Ascending aorta (tissue), 2 donors: ENCODE measurements at regions of chr9 and their contacts with region 1.

Region 1: GRCh38 chr9:127122176-127123063 is at the start of gene ANGPTL2:
- DNase-seq: peak; percentile 76 to 95
- H3K4me3 ChIP-seq: peak within 1 kb of the TSS; percentile 67 to 77
- H3K27ac ChIP-seq: peak within 1 kb of the TSS; percentile 90 to 93
- H3K4me1 ChIP-seq: peaks cover 13 to 28% of the 10 kb centered on the region in 2 donors
- H3K27me3 ChIP-seq: no peaks in the 10 kb centered on the region
- CTCF ChIP-seq: peak in 2 of 3 experiments; percentile 12 to 16
- total RNA-seq, gene ANGPTL2: 19.6 TPM

Region 2: DNA sequence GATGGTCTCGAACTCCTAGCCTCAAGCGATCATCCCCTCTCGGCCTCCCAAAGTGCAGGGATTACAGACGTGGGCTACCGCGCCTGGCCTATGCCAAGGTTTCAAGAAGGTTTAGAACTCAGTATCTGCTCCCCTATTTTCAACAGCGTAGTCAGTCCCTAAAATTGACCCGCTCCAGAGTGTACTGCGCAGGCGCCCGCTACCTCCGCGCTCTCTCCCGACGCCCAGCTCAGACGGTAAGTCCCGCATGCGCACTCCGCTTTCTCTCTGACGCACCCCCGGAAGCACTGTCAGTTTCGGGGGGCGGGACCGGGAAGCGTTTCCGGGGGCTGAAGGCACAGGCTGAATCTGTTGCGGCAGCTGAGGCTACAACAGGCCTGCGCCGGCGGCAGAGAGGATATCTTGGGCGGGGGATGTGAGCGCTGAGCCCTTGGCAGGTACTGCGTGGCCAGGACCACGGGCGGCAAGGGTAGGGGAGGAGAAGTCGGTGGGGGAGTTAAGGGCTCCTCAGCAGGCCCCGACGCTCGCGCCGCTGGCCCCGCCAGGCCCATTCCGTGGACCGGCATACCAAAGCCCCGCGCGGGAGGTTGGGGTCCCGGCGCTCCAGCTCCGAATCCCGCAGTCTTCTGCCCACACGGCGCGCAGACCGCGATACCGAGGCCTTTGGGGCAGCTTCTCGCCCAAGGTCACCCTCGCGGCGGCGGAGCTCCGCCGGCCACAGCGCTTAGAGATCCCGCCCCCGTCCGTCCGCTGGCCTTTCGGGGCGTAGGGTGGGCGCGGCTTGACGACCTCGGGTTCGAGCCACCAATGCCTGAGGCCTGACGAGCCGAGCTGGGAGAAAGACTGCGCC is 317.5 kb before region 1 on chr9 and contains the start of gene ZBTB43:
- intact Hi-C with region 1: no loop called
- DNase-seq: peak; percentile 88 to 98
- H3K4me3 ChIP-seq: peak within 1 kb of the TSS; percentile 89 to 97
- H3K27ac ChIP-seq: peak within 1 kb of the TSS; percentile 76 to 80
- H3K4me1 ChIP-seq: peaks cover 10 to 13% of the 10 kb centered on the region in 2 donors
- H3K27me3 ChIP-seq: no peaks in the 10 kb centered on the region
- CTCF ChIP-seq: no peak
- total RNA-seq, gene ZBTB43: 2.4 TPM

Region 3: GRCh38 chr9:127021664-127022363 is 100.6 kb before region 1 on chr9:
- intact Hi-C with region 1: loop called (anchors 5 kb)
- DNase-seq: peak; percentile 69 to 93
- H3K4me3 ChIP-seq: no peak overlapping the region
- H3K27ac ChIP-seq: peak overlapping the region; percentile 69 to 73
- H3K4me1 ChIP-seq: peaks cover 3 to 13% of the 10 kb centered on the region in 2 donors
- H3K27me3 ChIP-seq: no peaks in the 10 kb centered on the region
- CTCF ChIP-seq: no peak

Region 4: DNA sequence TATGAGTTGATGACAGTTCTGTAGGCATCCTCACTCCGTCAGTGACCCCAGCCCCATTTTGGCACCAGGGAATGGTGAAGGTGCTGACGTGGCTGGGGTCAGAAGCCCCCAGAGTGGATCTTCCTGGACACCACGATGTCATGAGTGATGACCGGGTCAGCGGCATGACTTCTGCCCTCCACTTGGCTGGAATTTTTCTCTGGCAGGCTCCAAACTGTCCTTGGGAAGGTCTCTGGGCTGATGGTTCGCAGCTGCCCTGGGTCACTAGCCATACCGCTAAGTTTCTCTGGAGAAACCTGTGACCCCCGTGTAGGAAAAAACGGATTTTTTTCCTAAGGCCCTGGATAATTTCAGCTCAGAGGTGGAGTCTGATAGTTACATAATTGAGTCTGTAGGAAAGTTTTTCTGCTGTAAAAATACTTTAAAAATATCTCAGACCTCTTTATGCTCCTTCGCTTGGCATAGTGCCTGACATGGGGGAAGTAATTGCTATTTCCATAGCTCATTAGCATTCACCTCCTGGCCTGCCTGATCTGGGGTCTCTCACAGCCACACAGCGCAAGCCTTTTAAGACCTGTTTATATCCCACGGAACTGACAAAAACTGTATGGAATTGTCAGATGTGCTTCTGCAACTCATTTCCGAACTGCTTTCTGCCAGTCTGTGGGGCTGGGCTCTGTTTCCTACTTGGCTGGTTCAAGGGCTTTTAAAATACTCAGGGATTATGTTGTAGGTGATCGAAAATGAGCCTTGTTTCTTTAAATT is 69.2 kb before region 1 on chr9:
- intact Hi-C with region 1: loop called (anchors 2 kb)
- DNase-seq: peak in 1 of 2 donors; percentile 61
- H3K4me3 ChIP-seq: no peak overlapping the region
- H3K27ac ChIP-seq: peak overlapping the region; percentile 71 to 75
- H3K4me1 ChIP-seq: peaks cover 0 to 10% of the 10 kb centered on the region in 2 donors
- H3K27me3 ChIP-seq: no peaks in the 10 kb centered on the region
- CTCF ChIP-seq: no peak

Region 5: GRCh38 chr9:127154390-127155191 is 32.2 kb after region 1 on chr9:
- intact Hi-C with region 1: loop called (anchors 2 kb)
- DNase-seq: peak in 1 of 2 donors; percentile 91
- H3K4me3 ChIP-seq: peak overlapping the region in 1 of 2 donors; percentile 46
- H3K27ac ChIP-seq: peak overlapping the region; percentile 57 to 59
- H3K4me1 ChIP-seq: peaks cover 4 to 8% of the 10 kb centered on the region in 2 donors
- H3K27me3 ChIP-seq: no peaks in the 10 kb centered on the region
- CTCF ChIP-seq: peak in 1 of 3 experiments; percentile 24

Region 6: GRCh38 chr9:127187231-127187956 is 65.0 kb after region 1 on chr9:
- intact Hi-C with region 1: loop called (anchors 1 kb)
- DNase-seq: peak in 1 of 2 donors; percentile 92
- H3K4me3 ChIP-seq: no peak overlapping the region
- H3K27ac ChIP-seq: peak overlapping the region; percentile 90 to 91
- H3K4me1 ChIP-seq: peaks cover 14 to 41% of the 10 kb centered on the region in 2 donors
- H3K27me3 ChIP-seq: no peaks in the 10 kb centered on the region
- CTCF ChIP-seq: peak in 1 of 3 experiments; percentile 9